ENCODE measurements at regions of chr9 and their contacts with region 1.

Region 1: DNA sequence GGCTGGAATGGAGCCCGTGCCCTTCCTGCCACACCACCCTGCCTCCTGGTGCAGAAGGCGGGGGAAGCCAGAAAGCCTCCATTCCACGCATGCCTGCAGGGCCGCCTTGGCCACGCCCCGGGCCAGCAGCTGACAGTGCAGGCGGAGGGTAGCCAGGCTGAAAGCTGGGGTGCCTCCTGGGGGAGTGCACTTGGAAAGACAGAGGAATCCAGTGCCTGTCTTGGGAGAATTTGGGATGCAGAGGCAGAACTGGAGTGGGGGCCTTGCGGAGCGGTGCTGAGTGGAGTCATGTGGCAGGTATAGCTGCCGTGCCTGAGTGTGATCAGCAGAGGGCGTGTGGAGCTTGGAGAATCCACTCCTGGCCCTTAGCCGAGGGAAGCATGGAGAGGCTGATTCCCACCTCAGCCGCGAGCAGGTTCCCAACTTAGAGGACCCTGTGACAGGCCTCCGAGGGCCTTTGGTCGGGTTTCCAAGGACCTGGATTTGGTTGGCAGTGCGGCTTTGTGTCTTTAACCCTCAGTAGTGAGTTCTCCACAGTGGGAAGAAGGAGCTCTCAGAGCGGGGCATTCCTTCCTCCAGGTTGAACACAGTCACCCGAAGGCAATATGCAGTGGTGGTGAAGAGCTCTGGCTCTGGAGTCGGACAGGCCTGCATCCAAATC is 9.1 kb upstream of the URM1 start:
- DNase-seq: peak; percentile 86
- ATAC-seq: peak; percentile 91

Region 2: DNA sequence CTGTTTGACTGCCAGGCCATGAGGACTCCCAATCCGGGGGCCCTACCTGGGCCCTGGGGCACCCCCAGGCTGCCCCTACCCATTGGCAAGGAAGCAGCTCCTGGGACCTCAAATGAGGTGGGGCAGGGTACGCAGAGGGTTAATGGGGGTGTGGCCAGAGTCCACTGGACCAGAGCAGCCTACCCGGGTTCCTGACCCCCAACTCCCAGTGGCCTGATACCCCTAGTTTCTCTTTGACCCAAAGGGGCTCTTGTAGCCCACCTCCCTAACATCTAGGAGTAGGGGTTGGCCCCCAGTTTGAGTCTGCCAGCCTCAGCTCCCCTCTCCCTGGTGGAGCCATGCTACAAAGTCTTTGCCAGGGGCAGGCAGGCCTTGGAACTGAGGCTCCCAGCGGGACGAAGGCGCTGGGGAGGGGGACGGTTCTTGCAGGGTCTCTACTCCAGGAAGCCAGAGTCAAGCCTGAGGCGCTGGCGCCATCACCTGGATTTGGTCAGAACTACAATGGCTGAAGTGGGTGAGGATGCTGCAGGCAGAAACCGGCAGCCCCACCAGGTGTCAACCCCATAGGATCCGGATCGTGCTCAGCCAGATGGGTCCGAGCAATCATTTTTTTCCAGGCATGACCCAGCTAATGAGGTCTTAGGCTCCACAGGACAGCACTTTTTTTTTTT is 50.1 kb after region 1 on chr9:
- intact Hi-C with region 1: loop called (anchors 1 kb)
- DNase-seq: no peak
- ATAC-seq: no peak

Region 3: DNA sequence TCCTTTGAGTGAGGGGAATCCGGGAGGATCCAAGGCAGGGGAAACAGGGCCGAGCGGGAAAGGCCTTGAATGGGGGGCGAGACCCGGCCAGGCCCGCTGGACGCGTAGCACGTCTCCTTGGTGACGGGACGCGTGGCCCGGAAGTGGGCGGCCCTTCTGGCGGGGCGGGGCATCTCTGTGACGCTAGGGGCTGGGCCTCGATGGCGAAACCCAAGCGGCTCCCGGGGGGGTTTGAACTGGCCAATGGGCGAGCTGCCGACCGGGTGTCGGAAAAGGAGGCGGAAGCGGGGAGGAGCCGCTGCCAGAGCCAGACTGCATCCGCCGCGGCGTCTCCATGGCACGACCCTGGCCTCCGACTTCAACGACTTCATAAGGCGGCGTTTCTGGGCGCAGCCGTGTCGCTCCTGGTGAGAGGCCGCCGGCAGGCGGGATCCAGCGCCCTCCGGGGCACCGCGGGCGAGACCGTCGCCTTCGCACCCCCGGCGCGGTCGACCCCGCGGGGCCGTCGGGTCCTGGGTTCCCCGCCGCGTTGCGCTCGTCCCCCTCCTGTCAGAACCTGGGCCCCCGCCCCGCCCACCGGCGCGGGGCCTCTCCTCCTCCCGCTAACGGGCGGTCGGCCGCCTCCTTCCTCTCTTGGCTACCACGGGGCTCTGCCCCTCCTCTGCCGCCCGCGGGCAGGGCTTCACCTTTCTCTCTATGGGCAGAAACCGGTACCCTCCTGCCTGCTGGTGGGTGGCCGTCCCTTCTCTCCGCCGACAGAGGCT is 93.9 kb after region 1 on chr9 and contains the start of gene ODF2:
- intact Hi-C with region 1: loop called (anchors 5 kb)
- DNase-seq: peak; percentile 98
- ATAC-seq: peak; percentile 94
- total RNA-seq, gene ODF2: 10.8 TPM

Region 4: DNA sequence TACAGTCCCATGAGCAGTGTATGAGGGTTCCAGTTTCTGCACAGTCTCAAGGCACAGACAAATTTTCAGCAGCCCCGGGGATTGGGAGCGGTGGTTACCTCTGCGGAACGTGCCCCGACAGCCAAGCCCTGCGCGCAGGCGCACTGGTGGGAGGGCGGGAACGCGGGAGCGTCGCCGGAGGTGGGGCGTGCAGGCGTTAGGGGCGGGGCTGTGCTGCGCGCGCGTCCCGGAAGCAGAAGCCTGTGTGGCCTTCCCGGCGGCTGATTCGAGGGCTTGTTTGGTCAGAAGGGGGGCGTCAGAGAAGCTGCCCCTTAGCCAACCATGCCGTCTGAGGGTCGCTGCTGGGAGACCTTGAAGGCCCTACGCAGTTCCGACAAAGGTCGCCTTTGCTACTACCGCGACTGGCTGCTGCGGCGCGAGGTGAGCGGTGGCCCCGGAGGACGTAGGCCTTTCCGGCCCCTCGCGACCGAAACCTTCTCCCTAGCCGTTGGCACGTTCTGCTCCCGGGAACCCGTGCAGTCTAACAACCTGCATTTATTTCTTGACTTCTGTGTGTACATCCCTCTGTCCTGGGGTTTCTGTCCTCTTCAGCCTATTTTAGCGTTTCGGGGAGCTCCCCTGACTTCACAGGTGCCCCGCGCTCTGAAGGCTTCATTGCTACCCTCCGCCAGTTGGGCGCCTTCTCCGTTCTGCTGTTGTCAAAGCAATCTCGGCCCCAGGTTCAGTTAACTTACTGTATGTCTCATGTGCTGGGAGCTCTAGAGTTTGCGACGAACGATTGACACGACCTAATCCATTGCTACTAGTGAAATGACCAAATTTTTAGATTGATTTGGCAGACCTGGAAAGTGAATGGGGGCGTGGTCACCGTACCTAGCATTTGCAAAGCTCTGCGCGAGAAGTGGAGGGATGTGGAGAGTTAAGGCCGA is 142.6 kb after region 1 on chr9 and contains the start of gene GLE1:
- intact Hi-C with region 1: no loop called
- DNase-seq: peak; percentile 99
- ATAC-seq: peak; percentile 100
- total RNA-seq, gene GLE1: 19.5 TPM

Region 5: GRCh38 chr9:128635283-128636023 is 273.3 kb after region 1 on chr9:
- intact Hi-C with region 1: loop called (anchors 10 kb)
- DNase-seq: peak; percentile 91
- ATAC-seq: peak; percentile 91

Measured in Right ventricle myocardium inferior (tissue), 1 donor.